Astrocyte of the cerebellum (primary cell): ENCODE measurements at regions of chr1 and their contacts with region 1.

Region 1: DNA sequence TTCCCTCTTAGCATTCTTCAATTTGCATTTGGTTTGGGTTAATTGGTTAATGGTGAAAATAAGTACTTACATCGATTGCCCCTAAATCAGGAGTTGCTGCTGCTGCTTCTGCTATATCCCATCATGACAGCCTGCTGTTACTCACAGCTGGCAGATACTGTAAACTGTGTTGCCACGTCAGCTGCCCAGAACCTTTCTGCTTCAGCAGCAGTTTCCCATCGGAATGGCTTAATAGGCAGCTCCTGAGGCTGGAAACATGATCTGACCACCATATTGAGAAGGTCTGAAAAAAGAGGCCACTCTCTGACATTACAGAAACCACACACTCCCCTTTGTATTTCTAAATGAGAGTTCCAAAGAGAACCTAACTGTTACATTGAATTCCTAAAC is 14.3 kb upstream of the SEC16B start:
- DNase-seq: peak; percentile 88
- H3K4me3 ChIP-seq: peak overlapping the region; percentile 24
- CTCF ChIP-seq: no peak

Region 2: DNA sequence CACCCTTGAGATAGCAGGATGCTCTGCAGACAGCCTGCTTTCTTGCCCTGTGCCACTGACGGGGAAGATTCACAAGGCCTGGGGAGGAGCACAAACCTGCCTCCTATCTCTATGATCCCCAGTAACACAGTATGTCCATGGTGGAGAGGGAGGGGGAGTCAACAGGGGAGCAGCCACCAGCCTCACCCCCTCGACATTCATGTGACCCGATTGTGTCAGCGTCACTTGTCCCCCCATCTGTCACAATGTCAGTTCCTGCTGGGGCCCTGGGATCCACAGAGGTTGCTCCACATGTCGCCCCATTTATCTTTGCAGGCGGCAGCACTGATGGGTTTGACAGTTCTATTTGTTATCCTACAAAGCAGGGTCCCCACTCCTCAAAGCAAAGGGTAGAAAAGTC is 145.2 kb before region 1 on chr1:
- in situ Hi-C with region 1: no loop called
- DNase-seq: no peak
- H3K4me3 ChIP-seq: no peak overlapping the region
- CTCF ChIP-seq: no peak

Region 3: GRCh38 chr1:177928194-177928593 is 55.9 kb before region 1 on chr1:
- in situ Hi-C with region 1: no loop called
- DNase-seq: no peak
- H3K4me3 ChIP-seq: no peak overlapping the region
- CTCF ChIP-seq: peak; percentile 39

Region 4: DNA sequence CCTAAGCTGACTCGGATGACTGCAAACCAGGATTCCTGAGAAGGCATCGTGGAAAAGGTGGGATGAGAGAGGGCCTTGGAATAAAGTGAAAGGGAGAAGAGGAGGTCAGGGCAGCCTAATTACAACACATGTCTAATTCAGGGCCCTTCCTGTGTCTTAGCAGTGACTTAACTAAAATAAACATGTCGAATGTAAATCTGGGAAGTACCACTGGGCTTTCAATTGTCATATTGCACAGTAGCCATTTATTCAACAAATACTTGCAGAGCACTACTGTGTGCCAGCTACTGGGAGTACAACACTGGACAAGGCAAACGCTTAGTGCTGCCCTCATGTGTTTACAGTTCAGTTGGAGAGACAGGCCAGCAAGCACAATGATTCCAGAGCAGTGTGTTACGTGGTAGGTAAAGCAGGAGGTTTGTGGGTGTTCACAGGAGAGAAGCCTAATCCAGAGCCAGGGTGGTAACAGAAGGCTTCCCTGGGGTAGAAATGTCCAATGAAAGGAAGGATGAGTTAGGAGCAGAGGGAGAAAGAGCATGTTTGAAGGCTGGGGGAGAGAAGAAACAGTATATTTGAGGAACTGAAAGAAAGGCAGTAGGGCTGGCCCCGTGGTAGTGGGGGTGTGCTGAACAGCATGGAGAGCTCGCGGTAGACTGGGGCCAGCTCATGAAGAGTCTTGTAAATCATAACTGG is 71.8 kb after region 1 on chr1:
- in situ Hi-C with region 1: no loop called
- DNase-seq: no peak
- H3K4me3 ChIP-seq: no peak overlapping the region
- CTCF ChIP-seq: no peak

Region 5: DNA sequence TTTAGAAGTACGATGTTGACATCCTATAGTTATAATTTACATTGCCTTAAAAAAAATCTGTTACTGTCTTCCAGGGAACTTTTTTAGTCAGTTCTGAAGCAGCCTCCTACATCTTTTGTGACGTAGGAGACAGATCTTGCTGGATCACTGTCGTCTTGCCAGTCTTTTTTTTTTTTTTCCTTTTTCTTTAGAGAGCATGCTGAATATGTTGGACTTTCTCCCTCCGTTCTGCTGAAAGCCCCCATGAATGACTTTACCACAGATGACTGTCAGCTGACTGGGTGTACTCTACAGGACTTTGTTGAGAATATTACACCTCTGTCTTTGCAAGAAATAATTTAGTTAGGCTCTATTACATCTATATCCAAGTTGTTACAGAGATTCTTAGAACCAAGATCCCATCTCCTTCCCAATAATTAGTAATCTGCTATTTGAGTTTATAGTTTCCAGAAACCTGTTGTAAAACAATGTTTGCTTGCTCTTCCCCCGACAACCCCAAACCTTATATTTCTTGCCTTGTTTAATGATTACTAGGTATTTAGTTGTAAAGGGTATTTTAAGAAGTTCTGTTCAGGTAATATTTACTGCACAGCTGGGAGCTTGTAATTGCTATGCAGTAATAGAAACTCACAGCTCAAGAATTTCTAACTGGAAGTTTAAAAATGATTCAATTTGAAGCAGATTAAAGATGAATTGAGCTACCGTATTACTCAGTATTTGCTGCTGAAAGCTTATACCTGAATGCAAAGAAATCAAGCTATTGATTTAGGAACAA is 171.5 kb after region 1 on chr1:
- in situ Hi-C with region 1: no loop called
- DNase-seq: no peak
- H3K4me3 ChIP-seq: no peak overlapping the region
- CTCF ChIP-seq: no peak

Region 6: GRCh38 chr1:178282949-178283367 is 298.8 kb after region 1 on chr1:
- in situ Hi-C with region 1: loop called (anchors 25 kb)
- DNase-seq: peak; percentile 50
- H3K4me3 ChIP-seq: no peak overlapping the region
- CTCF ChIP-seq: peak; percentile 56